K562 (cell line): ENCODE measurements at regions of chr16 and their contacts with region 1.

Region 1: GRCh38 chr16:70433458-70434103 is 5.3 kb downstream of the ST3GAL2 start:
- DNase-seq: peak in 2 of 4 experiments; percentile 13 to 45
- ATAC-seq: no peak
- H3K4me3 ChIP-seq: peak overlapping the region; percentile 37
- H3K27ac ChIP-seq: peak overlapping the region; percentile 88
- H3K4me1 ChIP-seq: peaks cover 53 to 68% of the 10 kb centered on the region in 2 experiments
- H3K27me3 ChIP-seq: no peaks in the 10 kb centered on the region
- CTCF ChIP-seq: no peak
- EP300 ChIP-seq: no peak
- POLR2A ChIP-seq: no peak
- RAD21 ChIP-seq: no peak

Region 2: DNA sequence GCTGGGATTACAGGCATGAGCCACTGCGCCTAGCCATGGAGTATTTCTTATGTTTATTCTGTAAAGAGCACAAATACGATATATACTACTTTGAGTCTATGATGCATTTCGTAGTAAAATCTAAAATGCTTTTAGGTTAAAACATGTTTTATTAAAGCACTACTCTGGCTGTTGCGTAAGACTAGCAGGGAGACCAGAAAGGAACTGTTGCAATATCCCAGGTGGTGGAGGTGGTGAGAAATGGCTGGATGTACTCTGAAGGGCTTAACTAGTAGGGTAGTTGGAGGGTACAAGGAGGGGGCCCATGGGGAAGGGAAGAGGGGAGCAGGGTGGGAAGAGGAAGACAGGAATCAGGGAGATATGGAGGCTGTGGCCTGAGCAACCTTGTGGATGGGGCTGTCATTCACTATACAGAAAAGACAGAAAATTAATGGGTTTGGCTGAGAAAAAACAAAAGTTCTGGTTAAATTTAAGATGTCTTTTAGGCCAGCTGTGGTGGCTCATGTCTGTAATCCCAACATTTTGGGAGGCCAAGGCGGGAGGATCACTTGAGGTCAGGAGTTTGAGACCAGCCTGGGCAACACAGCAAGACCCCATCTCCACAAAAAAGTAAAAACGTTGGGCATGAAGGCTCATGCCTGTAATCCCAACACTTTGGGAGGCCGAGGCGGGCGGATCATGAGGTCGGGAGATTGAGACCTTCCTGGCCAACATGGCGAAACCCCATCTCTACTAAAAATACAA is 30.5 kb before region 1 on chr16:
- CTCF ChIA-PET with region 1: no interaction called
- POLR2A ChIA-PET with region 1: interaction called, 17 read pairs
- in situ Hi-C with region 1: no loop called
- intact Hi-C with region 1: loop called (anchors 2 kb)
- DNase-seq: no peak
- ATAC-seq: no peak
- H3K4me3 ChIP-seq: no peak overlapping the region
- H3K27ac ChIP-seq: peak overlapping the region; percentile 69; the same call in 1 of the 3 replicates
- H3K4me1 ChIP-seq: peaks cover 24 to 51% of the 10 kb centered on the region in 2 experiments
- H3K27me3 ChIP-seq: no peaks in the 10 kb centered on the region
- CTCF ChIP-seq: no peak
- EP300 ChIP-seq: no peak
- POLR2A ChIP-seq: no peak
- RAD21 ChIP-seq: no peak